Dorsolateral prefrontal cortex (tissue), 120 donors: ENCODE measurements at regions of chr14 and their contacts with region 1.

Region 1: DNA sequence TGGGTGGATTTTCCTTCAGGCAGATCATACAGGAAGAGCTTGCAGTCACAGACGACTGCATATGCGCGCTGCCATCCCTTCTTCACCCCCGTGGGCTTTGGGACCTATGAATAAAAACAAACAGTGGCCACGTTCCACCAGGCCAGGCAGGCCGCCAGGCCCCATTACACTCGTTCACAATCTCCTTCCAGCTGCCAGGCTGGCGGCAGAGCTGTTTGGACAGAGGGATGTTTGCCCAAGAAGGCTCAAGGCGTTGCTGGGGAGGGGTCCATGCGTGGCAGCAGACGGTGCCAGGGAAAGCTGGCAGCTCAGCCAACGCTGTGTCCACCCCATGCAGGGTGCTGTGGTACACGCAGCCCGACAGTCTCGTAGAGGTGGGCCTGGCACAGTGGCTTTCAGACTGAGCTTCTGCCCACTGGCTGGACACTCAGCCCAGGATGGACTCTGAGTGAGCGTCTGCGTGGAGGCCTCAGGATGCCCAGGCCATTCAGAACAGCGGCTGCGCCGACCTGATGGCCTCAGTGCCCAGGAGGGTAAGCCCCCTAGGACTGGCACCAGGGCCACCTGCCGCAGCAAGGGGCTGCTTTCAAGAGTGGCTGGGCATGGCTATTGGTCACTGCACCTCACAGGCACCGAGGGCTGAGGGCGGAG is 27.5 kb downstream of the AMN start:
- DNase-seq: peak; percentile 59 to 90 (median 82)
- H3K4me3 ChIP-seq: peak overlapping the region in 2 of 59 donors; percentile 7 to 16
- H3K27ac ChIP-seq: peak overlapping the region; percentile 23 to 95 (median 88)
- H3K27me3 ChIP-seq: no peaks in the 10 kb centered on the region
- CTCF ChIP-seq: peak in 6 of 56 donors; percentile 8 to 16 (median 12)

Region 2: DNA sequence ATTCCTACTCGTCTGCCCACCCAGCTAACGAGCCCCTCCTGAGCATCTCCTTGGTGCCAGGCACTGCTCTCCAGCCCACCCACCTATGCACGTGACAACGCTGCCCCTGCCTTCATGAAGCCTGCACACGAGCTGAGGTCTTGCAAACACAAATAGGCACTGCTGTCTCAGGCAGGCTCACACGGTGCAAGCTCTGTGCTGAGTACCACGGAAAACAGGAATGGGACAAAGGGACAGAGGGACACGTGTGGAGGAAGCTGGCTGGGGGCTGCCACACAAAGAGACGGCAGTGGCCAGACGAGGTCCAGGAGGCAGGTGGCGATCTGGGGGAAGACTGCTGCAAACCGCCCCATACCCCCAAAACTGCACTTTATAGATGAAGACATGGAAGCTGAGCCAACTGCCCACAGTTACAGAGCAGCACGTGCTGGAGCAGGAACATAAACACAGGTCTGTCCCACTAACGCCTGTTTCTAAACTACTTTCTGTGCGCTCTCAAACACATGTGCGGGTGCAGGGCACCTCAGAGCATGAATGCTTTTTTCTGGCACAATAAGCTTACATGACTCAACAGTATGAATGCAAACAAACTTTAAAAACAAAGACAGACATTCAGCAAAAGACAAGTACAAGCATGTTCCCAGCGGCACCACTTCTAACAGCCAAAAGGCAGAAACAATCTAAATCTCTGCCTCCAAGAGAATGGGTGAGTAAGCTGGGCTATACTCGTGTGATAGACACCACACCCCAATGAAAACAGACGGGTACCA is 37.1 kb after region 1 on chr14:
- intact Hi-C with region 1: loop called in 1 of 2 experiments (anchors 5 kb)
- DNase-seq: peak in 1 of 10 donors; percentile 55
- H3K4me3 ChIP-seq: peak overlapping the region in 3 of 59 donors; percentile 4 to 25 (median 17)
- H3K27ac ChIP-seq: peak overlapping the region; percentile 1 to 89 (median 77)
- H3K27me3 ChIP-seq: no peaks in the 10 kb centered on the region
- CTCF ChIP-seq: peak in 1 of 56 donors; percentile 12